Transverse colon (tissue), 4 donors: ENCODE measurements at regions of chr19 and their contacts with region 1.

Region 1: GRCh38 chr19:11639602-11640471 is 42.6 kb downstream of the ZNF627 start:
- DNase-seq: peak; percentile 98
- H3K4me3 ChIP-seq: peak overlapping the region; percentile 47 to 75 (median 63)
- H3K27ac ChIP-seq: peak overlapping the region; percentile 44 to 79 (median 72)
- H3K4me1 ChIP-seq: peaks cover 0 to 7% (median 4%) of the 10 kb centered on the region in 4 donors
- H3K27me3 ChIP-seq: no peaks in the 10 kb centered on the region
- CTCF ChIP-seq: no peak
- EP300 ChIP-seq: no peak
- POLR2A ChIP-seq: no peak

Region 2: DNA sequence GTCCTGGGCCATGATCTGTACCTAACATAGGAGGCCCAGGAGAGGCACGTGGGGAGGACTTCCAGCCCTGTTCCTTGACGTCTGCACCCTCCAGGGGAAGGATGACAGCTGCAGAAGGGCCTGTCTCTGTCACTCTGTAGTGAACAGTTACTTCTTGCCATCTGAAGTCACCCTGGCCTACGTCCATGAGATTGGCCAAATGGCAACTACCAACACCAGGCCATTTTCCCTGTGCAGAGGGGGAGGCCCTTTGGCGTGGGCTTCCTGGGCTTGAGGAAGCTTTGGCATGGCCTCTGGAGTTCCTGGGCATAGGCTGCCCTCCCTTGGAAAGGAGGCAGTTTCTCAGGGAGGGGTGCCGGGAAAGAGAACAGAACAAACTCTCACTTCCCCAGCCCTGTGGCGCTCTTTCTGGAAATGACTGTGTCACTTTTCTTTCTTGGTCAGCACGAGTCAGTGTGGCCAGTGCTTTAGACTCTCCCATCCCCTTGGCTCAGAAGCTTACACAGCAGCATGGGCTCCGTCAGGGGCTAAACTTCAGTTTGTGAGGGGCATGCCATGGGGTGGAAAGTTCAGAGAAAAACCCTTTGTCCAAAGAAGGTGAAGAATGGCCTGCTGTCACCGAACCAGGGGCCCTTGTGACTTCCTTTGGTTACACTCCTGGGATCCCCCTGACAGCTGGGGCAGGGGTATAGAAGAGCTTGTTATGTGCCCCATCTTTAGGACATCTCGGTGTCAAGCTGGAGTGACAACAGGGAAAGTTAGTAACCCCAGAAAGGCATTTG is 763.2 kb before region 1 on chr19:
- in situ Hi-C with region 1: no loop called
- intact Hi-C with region 1: loop called (anchors 5 kb)
- DNase-seq: peak; percentile 44
- H3K4me3 ChIP-seq: no peak overlapping the region
- H3K27ac ChIP-seq: peak overlapping the region; percentile 28 to 53 (median 46)
- H3K4me1 ChIP-seq: peaks cover 33 to 65% (median 42%) of the 10 kb centered on the region in 4 donors
- H3K27me3 ChIP-seq: no peaks in the 10 kb centered on the region
- CTCF ChIP-seq: no peak
- EP300 ChIP-seq: no peak
- POLR2A ChIP-seq: no peak

Region 3: DNA sequence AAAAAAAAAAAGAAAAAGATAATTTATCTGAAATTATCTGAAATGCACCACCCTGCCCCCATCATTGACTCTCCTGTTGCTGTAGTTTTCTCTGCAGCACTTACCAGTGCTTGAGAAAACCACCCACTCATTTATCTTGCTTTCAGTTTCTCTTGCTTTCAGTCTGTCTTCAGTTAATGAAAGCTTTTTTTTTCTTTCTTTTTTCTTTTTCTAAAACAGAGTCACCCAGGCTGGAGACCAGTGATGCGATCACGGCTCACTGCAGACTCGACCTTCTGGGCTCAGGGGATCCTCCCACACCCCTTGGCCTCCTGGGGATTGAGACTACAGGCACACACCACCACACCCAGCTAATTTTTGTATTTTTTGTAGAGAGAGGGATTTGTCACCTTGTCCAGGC is 58.1 kb before region 1 on chr19:
- in situ Hi-C with region 1: no loop called
- intact Hi-C with region 1: no loop called
- DNase-seq: peak; percentile 25
- H3K4me3 ChIP-seq: no peak overlapping the region
- H3K27ac ChIP-seq: peak overlapping the region; percentile 51 to 62 (median 56)
- H3K4me1 ChIP-seq: peaks cover 0 to 26% (median 13%) of the 10 kb centered on the region in 4 donors
- H3K27me3 ChIP-seq: peaks cover 10% of the 10 kb centered on the region
- CTCF ChIP-seq: no peak
- EP300 ChIP-seq: no peak
- POLR2A ChIP-seq: no peak

Region 4: GRCh38 chr19:11598746-11599145 is 41.1 kb before region 1 on chr19:
- in situ Hi-C with region 1: no loop called
- intact Hi-C with region 1: loop called (anchors 1 kb)
- DNase-seq: no peak
- H3K4me3 ChIP-seq: peak overlapping the region in 1 of 4 donors; percentile 81
- H3K27ac ChIP-seq: no peak overlapping the region
- H3K4me1 ChIP-seq: peaks cover 7 to 27% (median 11%) of the 10 kb centered on the region in 4 donors
- H3K27me3 ChIP-seq: no peaks in the 10 kb centered on the region
- CTCF ChIP-seq: no peak
- EP300 ChIP-seq: no peak
- POLR2A ChIP-seq: no peak

Region 5: GRCh38 chr19:11659612-11660011 is 19.8 kb after region 1 on chr19:
- in situ Hi-C with region 1: no loop called
- intact Hi-C with region 1: no loop called
- DNase-seq: no peak
- H3K4me3 ChIP-seq: no peak overlapping the region
- H3K27ac ChIP-seq: no peak overlapping the region
- H3K4me1 ChIP-seq: peaks cover 0 to 5% (median 4%) of the 10 kb centered on the region in 4 donors
- H3K27me3 ChIP-seq: no peaks in the 10 kb centered on the region
- CTCF ChIP-seq: peak in 3 of 5 experiments; percentile 16 to 32 (median 23)
- EP300 ChIP-seq: no peak
- POLR2A ChIP-seq: no peak

Region 6: DNA sequence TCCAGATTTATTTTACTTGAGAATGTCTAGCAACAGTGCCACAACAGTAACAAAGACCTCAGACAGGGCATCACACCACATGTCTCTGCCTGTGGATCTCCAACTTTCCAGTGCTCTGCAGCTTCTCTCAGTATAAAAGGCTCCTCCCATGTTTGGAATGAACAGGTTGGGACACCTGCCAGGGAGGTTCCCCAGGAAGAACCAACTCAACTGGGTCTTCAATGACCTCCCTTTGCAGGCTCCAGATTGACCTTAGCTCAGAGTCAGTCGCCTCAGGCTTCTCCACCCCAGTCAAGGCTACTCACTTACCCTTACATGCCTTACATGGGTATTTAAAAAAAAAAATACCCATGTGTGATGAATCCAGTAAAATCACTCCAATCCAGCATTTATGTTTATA is 95.6 kb after region 1 on chr19:
- in situ Hi-C with region 1: no loop called
- intact Hi-C with region 1: no loop called
- DNase-seq: peak; percentile 34
- H3K4me3 ChIP-seq: no peak overlapping the region
- H3K27ac ChIP-seq: no peak overlapping the region
- H3K4me1 ChIP-seq: peaks cover 0 to 31% (median 17%) of the 10 kb centered on the region in 4 donors
- H3K27me3 ChIP-seq: no peaks in the 10 kb centered on the region
- CTCF ChIP-seq: no peak
- EP300 ChIP-seq: no peak
- POLR2A ChIP-seq: no peak

Region 7: DNA sequence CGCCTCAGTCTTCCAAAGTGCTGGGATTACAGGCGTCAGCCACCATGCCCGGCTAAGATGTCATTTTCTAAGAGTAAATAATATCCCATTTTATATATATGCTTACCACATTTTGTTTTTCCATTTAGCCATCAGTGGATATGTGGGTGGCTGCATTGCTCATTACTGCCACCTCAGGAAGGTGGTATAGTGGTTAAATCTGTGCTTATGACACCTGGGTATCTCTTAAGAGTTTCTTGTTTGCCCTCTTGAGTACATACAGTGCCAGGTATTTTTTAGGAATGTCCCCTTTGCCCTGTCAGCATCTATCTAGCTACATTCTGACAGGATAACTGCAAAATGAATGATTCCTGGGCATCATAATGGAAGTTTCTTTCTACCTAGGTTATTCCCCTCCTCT is 262.4 kb after region 1 on chr19:
- in situ Hi-C with region 1: no loop called
- intact Hi-C with region 1: no loop called
- DNase-seq: no peak
- H3K4me3 ChIP-seq: no peak overlapping the region
- H3K27ac ChIP-seq: no peak overlapping the region
- H3K4me1 ChIP-seq: no peaks in the 10 kb centered on the region
- H3K27me3 ChIP-seq: no peaks in the 10 kb centered on the region
- CTCF ChIP-seq: no peak
- EP300 ChIP-seq: no peak
- POLR2A ChIP-seq: no peak